Mammary epithelial cell (primary cell): ENCODE measurements at regions of chr3 and their contacts with region 1.

Region 1: GRCh38 chr3:55485211-55485791 is 1.8 kb downstream of the WNT5A start:
- DNase-seq: peak; percentile 62
- H3K4me3 ChIP-seq: peak overlapping the region; percentile 55 to 86 (median 80)
- H3K27ac ChIP-seq: peak overlapping the region; percentile 23
- H3K4me1 ChIP-seq: peaks cover 38% of the 10 kb centered on the region
- H3K27me3 ChIP-seq: no peaks in the 10 kb centered on the region
- CTCF ChIP-seq: peak; percentile 48 to 73

Region 2: DNA sequence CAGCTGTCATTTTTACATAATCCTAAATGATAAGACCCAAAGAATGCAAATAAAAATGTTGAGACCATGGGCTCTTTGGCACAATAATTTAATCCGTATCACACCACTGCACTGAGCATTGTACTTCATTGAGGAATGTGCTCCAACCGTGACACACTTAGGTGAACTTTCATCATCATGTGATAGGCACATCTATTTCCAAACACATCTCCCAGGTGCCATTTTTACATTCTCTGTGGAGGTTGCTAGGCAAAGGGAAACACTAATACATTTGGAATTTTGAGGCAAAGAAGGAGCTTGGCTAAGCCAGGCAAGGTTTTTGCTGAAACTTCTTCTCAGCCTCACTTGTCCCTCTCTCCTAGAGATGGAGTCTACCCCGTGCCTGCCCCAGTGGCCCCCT is 626.1 kb before region 1 on chr3:
- CTCF ChIA-PET with region 1: no interaction called
- dilution Hi-C with region 1: no loop called
- in situ Hi-C with region 1: no loop called
- intact Hi-C with region 1: loop called (anchors 5 kb)
- DNase-seq: peak; percentile 81
- H3K4me3 ChIP-seq: no peak overlapping the region
- H3K27ac ChIP-seq: no peak overlapping the region
- H3K4me1 ChIP-seq: peaks cover 32% of the 10 kb centered on the region
- H3K27me3 ChIP-seq: no peaks in the 10 kb centered on the region
- CTCF ChIP-seq: no peak

Region 3: DNA sequence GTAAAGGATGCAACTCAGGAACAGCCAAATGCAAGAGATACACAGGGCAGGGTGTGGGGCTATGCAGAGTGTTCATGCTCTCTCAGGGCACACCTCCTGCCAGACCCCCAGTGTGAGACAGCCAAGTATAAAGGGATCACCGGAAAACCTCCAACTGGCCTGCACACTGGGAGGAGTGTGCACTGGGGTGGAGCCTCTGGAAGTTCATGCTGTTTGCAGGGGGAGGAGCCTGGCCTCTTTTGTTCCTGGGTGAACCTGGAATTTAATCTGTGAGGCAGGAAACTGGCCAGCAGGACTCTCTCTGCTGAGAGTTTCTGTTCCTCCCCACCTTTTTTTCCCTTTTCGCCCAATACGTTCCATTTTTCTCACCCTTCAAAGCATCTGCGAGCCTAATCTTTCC is 202.3 kb before region 1 on chr3:
- CTCF ChIA-PET with region 1: no interaction called
- dilution Hi-C with region 1: no loop called
- in situ Hi-C with region 1: no loop called
- intact Hi-C with region 1: no loop called
- DNase-seq: no peak
- H3K4me3 ChIP-seq: no peak overlapping the region
- H3K27ac ChIP-seq: no peak overlapping the region
- H3K4me1 ChIP-seq: no peaks in the 10 kb centered on the region
- H3K27me3 ChIP-seq: no peaks in the 10 kb centered on the region
- CTCF ChIP-seq: no peak

Region 4: DNA sequence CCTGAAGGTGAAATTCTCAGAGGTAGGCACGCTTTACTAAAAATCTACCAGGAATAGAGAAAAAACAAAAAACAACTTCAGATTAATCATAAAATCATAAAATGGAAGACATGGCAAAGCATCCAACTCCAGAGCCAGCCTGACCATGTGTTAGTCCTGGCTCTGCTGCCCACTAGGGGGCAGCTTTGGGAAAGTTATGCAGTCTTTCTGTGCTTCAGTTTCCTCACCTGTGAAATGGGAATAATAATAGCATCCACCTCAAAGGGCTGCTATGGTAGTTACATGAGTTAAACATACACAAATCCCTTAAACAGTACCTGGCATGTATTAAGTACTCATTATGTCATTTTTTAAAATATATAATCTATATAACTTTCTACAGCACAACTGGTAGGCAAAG is 50.5 kb before region 1 on chr3:
- CTCF ChIA-PET with region 1: no interaction called
- dilution Hi-C with region 1: no loop called
- in situ Hi-C with region 1: no loop called
- intact Hi-C with region 1: loop called (anchors 2 kb)
- DNase-seq: peak; percentile 28
- H3K4me3 ChIP-seq: no peak overlapping the region
- H3K27ac ChIP-seq: no peak overlapping the region
- H3K4me1 ChIP-seq: no peaks in the 10 kb centered on the region
- H3K27me3 ChIP-seq: no peaks in the 10 kb centered on the region
- CTCF ChIP-seq: peak; percentile 64 to 75

Region 5: GRCh38 chr3:55571913-55572312 is 86.6 kb after region 1 on chr3:
- CTCF ChIA-PET with region 1: no interaction called
- dilution Hi-C with region 1: no loop called
- in situ Hi-C with region 1: no loop called
- intact Hi-C with region 1: no loop called
- DNase-seq: no peak
- H3K4me3 ChIP-seq: no peak overlapping the region
- H3K27ac ChIP-seq: no peak overlapping the region
- H3K4me1 ChIP-seq: no peaks in the 10 kb centered on the region
- H3K27me3 ChIP-seq: no peaks in the 10 kb centered on the region
- CTCF ChIP-seq: peak; percentile 29 to 38

Region 6: DNA sequence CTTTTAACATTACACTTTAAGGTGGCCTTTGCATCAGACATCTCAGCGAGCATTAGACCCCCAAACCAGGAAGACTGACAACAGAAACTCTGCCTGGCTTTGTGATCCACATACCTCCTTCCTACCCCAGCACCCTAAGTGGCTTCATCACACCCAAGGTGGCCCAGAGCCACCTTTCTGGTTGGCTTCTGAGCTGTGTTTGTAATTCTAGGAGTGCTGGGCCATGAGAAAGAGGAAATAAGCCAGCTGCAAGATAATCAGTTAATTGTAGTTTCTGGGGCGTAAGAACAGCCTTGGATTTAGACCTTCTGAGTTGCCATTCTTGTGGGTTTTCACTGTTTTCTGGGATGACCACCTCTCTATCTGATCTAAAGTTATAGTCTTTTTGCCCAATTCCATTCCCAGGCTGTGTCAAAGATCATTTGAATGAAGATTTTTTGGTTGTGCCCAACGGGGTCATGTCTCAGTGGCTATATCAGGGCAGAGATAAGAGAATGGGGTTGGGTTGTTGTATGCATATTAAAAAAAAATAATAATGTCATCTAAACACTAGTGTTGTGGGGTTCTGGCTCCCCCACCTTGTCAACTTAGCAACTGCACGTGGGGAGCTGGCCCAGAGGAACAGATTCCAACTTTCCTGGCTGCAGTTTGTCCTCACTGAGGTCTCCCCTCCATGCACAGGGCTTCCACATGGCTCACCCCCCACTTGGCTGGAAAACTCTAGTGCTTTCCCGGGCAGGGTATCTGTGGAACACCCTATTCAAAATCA is 236.6 kb after region 1 on chr3:
- CTCF ChIA-PET with region 1: interaction called, 4 read pairs
- dilution Hi-C with region 1: loop called (anchors 25 kb)
- in situ Hi-C with region 1: loop called (anchors 5 to 10 kb)
- intact Hi-C with region 1: loop called (anchors 1 kb)
- DNase-seq: peak; percentile 27
- H3K4me3 ChIP-seq: no peak overlapping the region
- H3K27ac ChIP-seq: no peak overlapping the region
- H3K4me1 ChIP-seq: no peaks in the 10 kb centered on the region
- H3K27me3 ChIP-seq: peaks cover 4% of the 10 kb centered on the region
- CTCF ChIP-seq: peak; percentile 73 to 76

Region 7: GRCh38 chr3:55897573-55898224 is 412.4 kb after region 1 on chr3:
- CTCF ChIA-PET with region 1: no interaction called
- dilution Hi-C with region 1: no loop called
- in situ Hi-C with region 1: loop called (anchors 10 kb)
- intact Hi-C with region 1: loop called (anchors 1 kb)
- DNase-seq: peak; percentile 45
- H3K4me3 ChIP-seq: no peak overlapping the region
- H3K27ac ChIP-seq: no peak overlapping the region
- H3K4me1 ChIP-seq: no peaks in the 10 kb centered on the region
- H3K27me3 ChIP-seq: no peaks in the 10 kb centered on the region
- CTCF ChIP-seq: peak; percentile 48 to 84

Region 8: DNA sequence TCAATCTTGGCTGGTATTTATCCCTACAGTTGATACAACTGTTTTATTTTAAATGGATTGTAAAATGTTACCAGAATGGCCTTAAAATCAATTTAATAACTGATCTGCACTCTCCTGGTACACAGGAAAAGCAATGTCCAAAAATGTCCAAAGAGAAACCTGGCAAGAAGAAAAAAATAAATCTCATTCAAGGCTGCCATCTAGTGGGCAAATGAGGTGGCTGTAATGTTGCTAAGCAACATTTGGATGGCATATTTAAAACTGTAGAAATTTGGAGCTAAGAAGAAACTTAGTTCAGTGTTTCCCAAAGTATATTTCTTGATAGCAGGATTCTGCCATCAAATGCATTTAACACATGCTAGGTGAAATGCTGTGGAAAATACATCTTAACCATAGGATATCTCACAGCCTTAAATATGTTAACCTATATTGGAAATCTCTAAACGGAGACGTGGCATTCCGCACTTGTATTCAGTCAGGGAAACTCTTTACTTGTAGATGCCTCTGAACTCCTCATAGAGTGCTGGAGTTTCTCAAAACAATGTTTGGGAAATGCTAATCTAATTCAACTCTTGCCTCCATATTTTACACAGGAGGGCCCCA is 766.1 kb after region 1 on chr3:
- CTCF ChIA-PET with region 1: no interaction called
- dilution Hi-C with region 1: no loop called
- in situ Hi-C with region 1: no loop called
- intact Hi-C with region 1: loop called (anchors 2 kb)
- DNase-seq: peak; percentile 31
- H3K4me3 ChIP-seq: no peak overlapping the region
- H3K27ac ChIP-seq: no peak overlapping the region
- H3K4me1 ChIP-seq: no peaks in the 10 kb centered on the region
- H3K27me3 ChIP-seq: peaks cover 3% of the 10 kb centered on the region
- CTCF ChIP-seq: peak; percentile 71 to 77

Region 9: DNA sequence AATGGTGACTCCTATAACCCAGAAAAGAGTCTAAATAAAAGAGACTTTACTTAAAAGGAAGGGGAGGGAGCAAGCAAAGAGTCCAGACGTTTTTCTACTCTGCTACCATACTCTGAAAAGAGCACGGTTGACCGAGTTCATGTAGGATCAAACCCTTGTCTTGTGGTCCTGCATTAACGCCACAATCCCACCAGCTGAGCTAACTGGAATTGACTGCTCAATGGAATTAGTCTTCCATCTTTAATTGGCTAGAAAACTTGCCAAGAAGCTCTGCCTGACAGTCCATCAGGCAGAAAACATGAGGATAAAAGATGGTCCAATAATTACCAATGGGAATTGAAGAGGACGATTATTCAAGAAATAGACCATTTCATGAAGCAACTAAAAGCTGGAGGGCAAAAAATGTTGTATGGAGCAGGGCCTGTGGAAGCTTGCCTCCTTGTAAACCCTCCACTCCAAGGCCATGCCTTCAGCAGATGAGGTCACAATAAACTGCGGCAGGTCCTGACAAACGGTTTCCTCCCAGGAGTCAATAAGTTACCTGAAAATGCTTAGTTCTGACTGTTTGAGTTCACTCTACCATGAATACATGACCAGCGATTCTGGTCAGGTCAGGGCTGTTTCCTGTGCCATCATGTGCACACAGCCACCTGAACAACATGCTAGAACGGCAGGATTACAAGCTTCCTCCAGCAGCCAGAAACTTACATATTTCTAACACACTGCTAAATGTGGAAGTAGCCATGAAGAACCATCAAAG is 1352.1 kb after region 1 on chr3:
- CTCF ChIA-PET with region 1: no interaction called
- dilution Hi-C with region 1: no loop called
- in situ Hi-C with region 1: no loop called
- intact Hi-C with region 1: no loop called
- DNase-seq: peak; percentile 39
- H3K4me3 ChIP-seq: no peak overlapping the region
- H3K27ac ChIP-seq: peak overlapping the region; percentile 22
- H3K4me1 ChIP-seq: peaks cover 40% of the 10 kb centered on the region
- H3K27me3 ChIP-seq: no peaks in the 10 kb centered on the region
- CTCF ChIP-seq: no peak